Aorta (tissue), 5 donors: ENCODE measurements at regions of chr5 and their contacts with region 1.

Region 1: DNA sequence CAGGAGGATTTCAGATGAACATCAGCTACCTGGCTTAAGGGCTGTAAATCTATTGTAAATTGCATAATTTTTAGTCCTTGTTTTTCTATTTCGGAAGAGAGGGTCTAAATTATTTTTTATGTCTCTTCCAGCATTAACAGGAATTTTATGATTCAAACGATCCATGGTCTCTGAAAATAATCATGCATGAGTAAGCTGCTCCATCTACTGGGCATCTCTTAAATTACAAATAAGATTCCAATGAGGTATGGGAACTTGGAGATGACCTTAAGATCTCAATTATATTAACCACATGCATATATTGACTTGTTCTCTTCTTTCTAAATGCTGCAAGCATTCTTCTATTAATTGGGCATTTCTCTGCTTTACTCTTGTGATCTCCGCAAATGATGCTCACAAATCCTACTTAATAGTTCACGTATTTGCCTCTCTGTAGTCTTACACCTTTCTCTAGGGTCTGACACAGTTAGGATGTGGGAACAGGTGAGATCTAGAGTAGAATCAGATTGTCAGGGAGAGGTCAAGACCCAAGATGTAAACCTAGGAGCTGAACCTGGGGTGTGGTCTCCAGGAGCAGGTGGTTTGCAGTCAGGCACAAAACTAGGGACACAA is 86.9 kb downstream of the NUDT12 start:
- DNase-seq: no peak
- ATAC-seq: no peak
- H3K4me3 ChIP-seq: no peak overlapping the region
- H3K27ac ChIP-seq: no peak overlapping the region
- H3K4me1 ChIP-seq: no peaks in the 10 kb centered on the region
- H3K27me3 ChIP-seq: no peaks in the 10 kb centered on the region

Region 2: DNA sequence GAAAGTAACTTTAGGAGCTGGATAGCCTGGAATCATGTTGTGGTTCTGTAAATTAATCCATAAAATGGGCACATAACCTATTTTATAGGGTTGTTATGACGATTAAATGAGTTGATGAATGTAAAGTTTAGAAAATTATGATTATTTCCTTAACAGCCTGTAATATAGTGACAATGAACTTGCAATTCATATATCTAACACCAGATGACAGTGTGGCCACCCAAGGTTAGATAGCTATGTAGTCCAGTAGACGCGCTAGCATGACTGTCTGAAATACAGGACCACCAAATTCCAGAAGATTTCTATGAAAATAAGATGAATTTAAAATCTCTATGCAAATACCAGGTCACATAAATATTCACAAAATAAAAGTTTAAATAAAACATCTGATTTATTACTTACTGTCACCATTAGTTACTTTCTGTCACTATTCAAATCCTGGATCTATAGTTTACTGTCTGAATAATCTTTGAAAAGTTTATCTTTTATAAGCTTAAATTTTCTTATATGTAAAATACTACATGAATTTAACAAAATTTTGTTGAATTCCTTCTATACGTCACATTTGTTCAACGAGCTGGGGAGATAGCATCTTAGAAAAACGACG is 243.2 kb before region 1 on chr5:
- intact Hi-C with region 1: loop called (anchors 1 to 2 kb)
- DNase-seq: no peak
- ATAC-seq: peak; percentile 81
- H3K4me3 ChIP-seq: no peak overlapping the region
- H3K27ac ChIP-seq: no peak overlapping the region
- H3K4me1 ChIP-seq: no peaks in the 10 kb centered on the region
- H3K27me3 ChIP-seq: no peaks in the 10 kb centered on the region